ENCODE measurements at regions of chr5 and their contacts with region 1.

Region 1: GRCh38 chr5:171913987-171914273 is 92.5 kb downstream of the FBXW11 start:
- DNase-seq: no peak
- H3K4me3 Mint-ChIP-seq: no peak overlapping the region
- H3K27ac Mint-ChIP-seq: peak overlapping the region; percentile 16
- H3K4me1 Mint-ChIP-seq: peaks cover 26% of the 10 kb centered on the region
- H3K27me3 Mint-ChIP-seq: no peaks in the 10 kb centered on the region
- CTCF ChIP-seq: no peak

Region 2: GRCh38 chr5:171667341-171668096 is 246.4 kb before region 1 on chr5:
- CTCF ChIA-PET with region 1: no interaction called
- intact Hi-C with region 1: no loop called
- DNase-seq: peak; percentile 57
- H3K4me3 Mint-ChIP-seq: peak overlapping the region; percentile 32
- H3K27ac Mint-ChIP-seq: no peak overlapping the region
- H3K4me1 Mint-ChIP-seq: no peaks in the 10 kb centered on the region
- H3K27me3 Mint-ChIP-seq: peaks cover 98% of the 10 kb centered on the region
- CTCF ChIP-seq: no peak

Region 3: DNA sequence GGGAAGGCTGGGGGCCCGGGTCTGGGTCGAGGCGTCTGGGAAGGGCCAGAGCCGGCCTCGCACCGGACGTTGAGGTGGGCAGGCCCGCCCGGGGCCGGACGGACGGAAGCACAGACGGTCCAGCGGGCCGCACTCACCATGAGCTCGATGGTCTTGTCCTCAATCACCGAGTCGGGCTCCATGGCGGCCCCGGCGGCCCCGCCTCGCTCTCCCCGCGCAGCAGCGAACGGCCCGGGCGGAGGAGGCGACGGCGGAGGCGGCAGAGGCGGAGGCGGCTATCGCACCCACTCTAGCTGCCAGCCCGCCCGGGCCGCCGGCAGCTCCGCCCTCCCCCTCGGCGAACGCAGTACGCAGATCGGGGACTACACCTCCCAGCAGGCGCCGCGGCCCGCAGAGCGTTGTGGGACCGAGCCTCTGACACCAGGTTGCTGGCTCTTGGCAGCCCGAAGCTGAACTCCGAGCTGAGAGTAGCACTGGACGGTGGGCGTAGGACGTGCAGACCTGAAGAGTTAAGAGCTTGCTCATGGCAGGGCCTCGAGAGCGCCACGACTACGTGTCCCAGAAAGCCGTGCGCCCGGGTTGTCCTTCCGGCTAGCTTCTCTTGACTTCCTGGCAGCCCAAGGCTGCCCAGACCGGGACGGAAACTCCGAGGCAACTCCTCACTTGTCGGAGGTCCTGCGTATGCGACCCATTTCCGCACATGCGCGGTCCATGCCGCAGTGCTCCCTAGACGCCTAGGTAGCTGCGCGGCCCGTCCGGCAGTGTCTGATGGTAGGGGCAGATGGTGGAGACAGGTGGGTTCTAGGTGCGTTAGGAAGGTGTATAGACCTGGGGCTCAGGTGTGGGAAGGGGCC is 92.6 kb after region 1 on chr5 and contains the start of gene FBXW11:
- CTCF ChIA-PET with region 1: interaction called, 35 read pairs
- intact Hi-C with region 1: loop called (anchors 2 kb)
- DNase-seq: peak; percentile 97
- H3K4me3 Mint-ChIP-seq: peak within 1 kb of the TSS; percentile 97
- H3K27ac Mint-ChIP-seq: peak within 1 kb of the TSS; percentile 98
- H3K4me1 Mint-ChIP-seq: peaks cover 64% of the 10 kb centered on the region
- H3K27me3 Mint-ChIP-seq: no peaks in the 10 kb centered on the region
- CTCF ChIP-seq: no peak
- total RNA-seq, gene FBXW11: 63.3 and 66.4 TPM in 2 replicates

Region 4: GRCh38 chr5:172035039-172035438 is 121.1 kb after region 1 on chr5:
- CTCF ChIA-PET with region 1: interaction called, 12 read pairs
- intact Hi-C with region 1: loop called (anchors 1 kb)
- DNase-seq: no peak
- H3K4me3 Mint-ChIP-seq: no peak overlapping the region
- H3K27ac Mint-ChIP-seq: no peak overlapping the region
- H3K4me1 Mint-ChIP-seq: peaks cover 4% of the 10 kb centered on the region
- H3K27me3 Mint-ChIP-seq: peaks cover 16% of the 10 kb centered on the region
- CTCF ChIP-seq: no peak

Region 5: DNA sequence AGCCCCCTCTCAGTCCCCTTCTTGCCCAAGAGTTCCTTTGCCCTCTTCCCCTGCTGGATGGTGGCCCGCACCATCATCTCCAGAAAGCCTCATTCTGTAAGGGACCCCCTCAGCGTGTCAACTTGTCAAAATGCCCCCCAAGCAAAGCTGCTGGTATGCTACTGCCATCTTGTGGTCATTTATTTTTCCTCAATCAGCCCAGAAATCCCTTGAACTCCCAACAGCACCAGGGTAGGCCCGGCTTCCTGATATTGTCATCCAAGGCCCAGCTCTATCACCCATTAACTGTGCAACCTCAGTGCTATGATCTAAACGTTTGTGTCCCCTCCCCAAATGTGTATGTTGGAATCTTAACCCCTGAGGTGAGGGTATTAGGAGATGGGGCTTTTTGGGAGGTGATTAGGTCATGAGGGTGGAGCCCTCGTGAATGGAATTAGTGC is 145.8 kb after region 1 on chr5:
- CTCF ChIA-PET with region 1: interaction called, 40 read pairs
- intact Hi-C with region 1: no loop called
- DNase-seq: no peak
- H3K4me3 Mint-ChIP-seq: no peak overlapping the region
- H3K27ac Mint-ChIP-seq: no peak overlapping the region
- H3K4me1 Mint-ChIP-seq: no peaks in the 10 kb centered on the region
- H3K27me3 Mint-ChIP-seq: no peaks in the 10 kb centered on the region
- CTCF ChIP-seq: peak; percentile 74

Region 6: GRCh38 chr5:172188033-172188892 is 274.3 kb after region 1 on chr5 and contains the start of gene STK10:
- CTCF ChIA-PET with region 1: interaction called, 6 read pairs
- intact Hi-C with region 1: loop called (anchors 5 kb)
- DNase-seq: peak; percentile 96
- H3K4me3 Mint-ChIP-seq: peak within 1 kb of the TSS; percentile 81
- H3K27ac Mint-ChIP-seq: peak within 1 kb of the TSS; percentile 71
- H3K4me1 Mint-ChIP-seq: peaks cover 20% of the 10 kb centered on the region
- H3K27me3 Mint-ChIP-seq: peaks cover 15% of the 10 kb centered on the region
- CTCF ChIP-seq: peak; percentile 55
- total RNA-seq, gene STK10: 27.4 and 32.1 TPM in 2 replicates

Region 7: GRCh38 chr5:172293054-172293744 is 379.3 kb after region 1 on chr5:
- CTCF ChIA-PET with region 1: interaction called, 9 read pairs
- intact Hi-C with region 1: loop called (anchors 2 kb)
- DNase-seq: peak; percentile 72
- H3K4me3 Mint-ChIP-seq: no peak overlapping the region
- H3K27ac Mint-ChIP-seq: no peak overlapping the region
- H3K4me1 Mint-ChIP-seq: no peaks in the 10 kb centered on the region
- H3K27me3 Mint-ChIP-seq: no peaks in the 10 kb centered on the region
- CTCF ChIP-seq: peak; percentile 87